Tibial artery (tissue), 4 donors: ENCODE measurements at regions of chr17 and their contacts with region 1.

Region 1: DNA sequence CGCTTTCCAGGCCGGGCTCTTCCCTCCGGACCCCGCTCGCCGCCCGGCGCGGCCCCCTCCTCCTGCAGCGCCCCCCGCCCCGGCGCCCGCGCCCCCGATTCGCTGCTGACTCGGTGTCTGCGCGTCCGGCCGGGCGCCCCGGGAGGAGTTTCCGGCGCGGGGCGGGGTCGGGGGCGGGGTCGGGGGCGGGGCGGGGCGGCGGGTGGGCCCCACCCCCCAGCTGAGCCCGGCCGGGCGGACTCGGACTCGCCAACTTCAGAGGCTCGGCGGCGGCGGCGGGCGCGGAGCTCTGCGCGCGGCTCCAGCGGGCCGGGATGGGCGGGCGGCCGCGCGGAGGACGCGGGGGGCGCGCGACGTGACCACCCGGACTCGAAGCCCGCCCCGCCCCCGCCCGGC is at the start of gene METRNL:
- DNase-seq: peak; percentile 72 to 89
- H3K4me3 ChIP-seq: peak within 1 kb of the TSS; percentile 72 to 78
- H3K27ac ChIP-seq: peak within 1 kb of the TSS; percentile 93 to 97
- H3K4me1 ChIP-seq: peaks cover 0 to 52% (median 44%) of the 10 kb centered on the region in 4 donors
- H3K27me3 ChIP-seq: no peaks in the 10 kb centered on the region
- CTCF ChIP-seq: no peak

Region 2: GRCh38 chr17:83051395-83052233 is 27.7 kb before region 1 on chr17:
- intact Hi-C with region 1: loop called (anchors 1 kb)
- DNase-seq: peak; percentile 97 to 99
- H3K4me3 ChIP-seq: peak overlapping the region; percentile 72 to 97
- H3K27ac ChIP-seq: peak overlapping the region; percentile 76 to 87
- H3K4me1 ChIP-seq: peaks cover 0 to 31% (median 24%) of the 10 kb centered on the region in 4 donors
- H3K27me3 ChIP-seq: no peaks in the 10 kb centered on the region
- CTCF ChIP-seq: peak in 1 of 2 experiments; percentile 5